MCF 10A (cell line): ENCODE measurements at regions of chr2 and their contacts with region 1.

Region 1: DNA sequence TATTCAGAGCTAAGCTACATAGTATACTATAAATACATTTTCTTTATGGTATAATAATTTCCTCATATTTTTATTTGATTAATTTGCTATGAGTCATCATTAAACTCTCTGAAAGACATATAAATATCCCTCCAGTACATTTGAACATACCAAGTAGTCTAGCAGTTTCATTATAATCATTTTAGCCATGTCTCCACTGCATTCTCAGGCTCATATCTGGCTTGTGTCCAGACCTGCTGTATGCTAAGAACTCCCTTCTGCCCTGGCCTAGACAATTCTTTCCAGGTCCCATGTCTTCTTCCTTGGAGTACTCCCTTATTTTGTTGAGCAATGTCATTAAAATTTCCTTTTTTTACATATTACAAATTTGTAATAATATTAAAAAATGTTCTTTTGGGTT is 16.6 kb upstream of the DYNC1I2 start:
- DNase-seq: no peak
- H3K4me3 Mint-ChIP-seq: no peak overlapping the region
- H3K27ac Mint-ChIP-seq: no peak overlapping the region
- H3K4me1 Mint-ChIP-seq: no peaks in the 10 kb centered on the region
- H3K27me3 Mint-ChIP-seq: peaks cover 41% of the 10 kb centered on the region
- CTCF ChIP-seq: no peak

Region 2: GRCh38 chr2:171687287-171688128 is 16.9 kb after region 1 on chr2 and contains the start of gene DYNC1I2:
- CTCF ChIA-PET with region 1: interaction called, 3 read pairs
- POLR2A ChIA-PET with region 1: interaction called, 12 read pairs
- intact Hi-C with region 1: no loop called
- DNase-seq: peak; percentile 96
- H3K4me3 Mint-ChIP-seq: peak within 1 kb of the TSS; percentile 96
- H3K27ac Mint-ChIP-seq: peak within 1 kb of the TSS; percentile 95
- H3K4me1 Mint-ChIP-seq: no peaks in the 10 kb centered on the region
- H3K27me3 Mint-ChIP-seq: peaks cover 6% of the 10 kb centered on the region
- CTCF ChIP-seq: no peak
- total RNA-seq, gene DYNC1I2: 77.7 and 82.7 TPM in 2 replicates

Region 3: DNA sequence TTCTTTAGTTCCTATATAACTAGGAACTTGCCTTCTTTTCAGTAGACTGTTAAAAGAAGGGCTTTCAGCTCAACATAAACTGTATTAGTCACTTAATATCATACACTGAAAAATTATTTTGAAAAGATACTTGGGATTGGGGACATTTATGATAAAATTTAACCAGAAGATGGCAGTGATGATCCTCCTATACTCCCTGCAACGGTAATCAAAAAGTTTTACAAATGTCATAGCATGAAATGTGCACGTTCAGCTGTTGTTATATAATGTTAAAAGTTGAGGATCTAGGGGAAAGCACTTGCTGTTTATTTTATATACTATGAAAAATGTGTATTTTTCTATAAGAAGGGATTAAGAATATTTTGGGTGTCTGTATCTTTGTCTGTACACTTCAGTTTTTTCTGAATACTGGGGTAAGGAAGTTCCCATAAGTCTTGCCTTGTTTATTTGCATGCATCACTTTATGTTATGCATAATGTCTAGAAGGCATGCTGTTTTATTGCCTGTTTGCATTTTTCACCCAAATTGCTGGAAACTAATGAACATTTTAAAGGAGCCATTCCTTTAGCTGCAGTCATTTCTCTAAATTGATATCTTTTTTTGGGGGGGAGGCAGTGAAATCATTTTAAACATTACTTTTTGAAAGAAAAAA is 35.6 kb after region 1 on chr2:
- CTCF ChIA-PET with region 1: no interaction called
- POLR2A ChIA-PET with region 1: no interaction called
- intact Hi-C with region 1: no loop called
- DNase-seq: peak; percentile 37
- H3K4me3 Mint-ChIP-seq: no peak overlapping the region
- H3K27ac Mint-ChIP-seq: no peak overlapping the region
- H3K4me1 Mint-ChIP-seq: peaks cover 24% of the 10 kb centered on the region
- H3K27me3 Mint-ChIP-seq: no peaks in the 10 kb centered on the region
- CTCF ChIP-seq: peak; percentile 30